Esophagus squamous epithelium (tissue), 5 donors: ENCODE measurements at regions of chr12 and their contacts with region 1.

Region 1: GRCh38 chr12:12562585-12563261 is at the start of gene DUSP16:
- DNase-seq: peak; percentile 28
- H3K4me3 ChIP-seq: peak within 1 kb of the TSS; percentile 67 to 99 (median 82)
- H3K27ac ChIP-seq: peak within 1 kb of the TSS; percentile 97 to 100 (median 98)
- H3K4me1 ChIP-seq: peaks cover 14 to 44% (median 15%) of the 10 kb centered on the region in 3 donors
- H3K27me3 ChIP-seq: no peaks in the 10 kb centered on the region
- CTCF ChIP-seq: peak in 4 of 6 experiments; percentile 21 to 30 (median 26)
- POLR2A ChIP-seq: peak in 3 of 4 donors; percentile 79 to 88 (median 82)
- total RNA-seq, gene DUSP16: 15.6 to 27.9 (median 16.5) TPM

Region 2: GRCh38 chr12:12384571-12385340 is 178.0 kb before region 1 on chr12:
- intact Hi-C with region 1: no loop called
- DNase-seq: no peak
- H3K4me3 ChIP-seq: no peak overlapping the region
- H3K27ac ChIP-seq: peak overlapping the region in 1 of 4 donors; percentile 38
- H3K4me1 ChIP-seq: peaks cover 0 to 30% (median 0%) of the 10 kb centered on the region in 3 donors
- H3K27me3 ChIP-seq: no peaks in the 10 kb centered on the region
- CTCF ChIP-seq: no peak
- POLR2A ChIP-seq: no peak

Region 3: GRCh38 chr12:12398026-12398859 is 164.5 kb before region 1 on chr12:
- intact Hi-C with region 1: loop called (anchors 10 kb)
- DNase-seq: no peak
- H3K4me3 ChIP-seq: peak overlapping the region in 1 of 4 donors; percentile 8
- H3K27ac ChIP-seq: peak overlapping the region in 3 of 4 donors; percentile 59 to 84 (median 70)
- H3K4me1 ChIP-seq: peaks cover 6 to 36% (median 8%) of the 10 kb centered on the region in 3 donors
- H3K27me3 ChIP-seq: no peaks in the 10 kb centered on the region
- CTCF ChIP-seq: peak in 1 of 6 experiments; percentile 16
- POLR2A ChIP-seq: no peak

Region 4: DNA sequence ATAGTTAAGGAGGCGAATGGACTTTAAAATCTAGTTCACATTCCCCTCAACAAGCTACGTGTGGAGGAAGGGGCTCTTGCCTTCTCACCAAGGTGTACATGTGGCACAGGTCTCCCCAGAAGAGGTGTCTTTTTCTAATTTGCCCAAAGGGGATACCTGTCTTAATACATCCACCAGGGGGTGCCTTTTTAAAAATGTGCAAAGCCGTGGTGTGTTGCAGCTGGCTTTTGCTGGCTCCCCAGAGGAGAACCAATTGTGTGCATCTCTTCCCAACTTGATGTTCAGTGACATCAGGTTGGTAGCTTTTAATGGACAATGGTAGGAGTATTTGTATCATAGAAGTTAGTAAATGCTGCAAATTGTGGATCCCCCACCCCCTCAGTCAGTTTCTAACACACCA is 82.8 kb after region 1 on chr12:
- intact Hi-C with region 1: no loop called
- DNase-seq: no peak
- H3K4me3 ChIP-seq: no peak overlapping the region
- H3K27ac ChIP-seq: no peak overlapping the region
- H3K4me1 ChIP-seq: no peaks in the 10 kb centered on the region
- H3K27me3 ChIP-seq: no peaks in the 10 kb centered on the region
- CTCF ChIP-seq: peak in 5 of 6 experiments; percentile 23 to 55 (median 34)
- POLR2A ChIP-seq: no peak

Region 5: GRCh38 chr12:12696562-12697383 is 134.1 kb after region 1 on chr12:
- intact Hi-C with region 1: loop called (anchors 10 kb)
- DNase-seq: peak; percentile 65
- H3K4me3 ChIP-seq: peak overlapping the region; percentile 48 to 65 (median 58)
- H3K27ac ChIP-seq: peak overlapping the region; percentile 88 to 95 (median 92)
- H3K4me1 ChIP-seq: peaks cover 0 to 16% (median 0%) of the 10 kb centered on the region in 3 donors
- H3K27me3 ChIP-seq: no peaks in the 10 kb centered on the region
- CTCF ChIP-seq: peak in 1 of 6 experiments; percentile 2
- POLR2A ChIP-seq: peak in 3 of 4 donors; percentile 37 to 91 (median 51)